ENCODE measurements at regions of chr2 and their contacts with region 1.

Region 1: GRCh38 chr2:37389989-37390765 is 45.7 kb downstream of the QPCT start:
- DNase-seq: peak; percentile 98
- H3K4me3 ChIP-seq: no peak overlapping the region
- H3K27ac ChIP-seq: peak overlapping the region; percentile 85
- H3K4me1 ChIP-seq: peaks cover 43% of the 10 kb centered on the region
- H3K27me3 ChIP-seq: no peaks in the 10 kb centered on the region
- CTCF ChIP-seq: no peak

Region 2: DNA sequence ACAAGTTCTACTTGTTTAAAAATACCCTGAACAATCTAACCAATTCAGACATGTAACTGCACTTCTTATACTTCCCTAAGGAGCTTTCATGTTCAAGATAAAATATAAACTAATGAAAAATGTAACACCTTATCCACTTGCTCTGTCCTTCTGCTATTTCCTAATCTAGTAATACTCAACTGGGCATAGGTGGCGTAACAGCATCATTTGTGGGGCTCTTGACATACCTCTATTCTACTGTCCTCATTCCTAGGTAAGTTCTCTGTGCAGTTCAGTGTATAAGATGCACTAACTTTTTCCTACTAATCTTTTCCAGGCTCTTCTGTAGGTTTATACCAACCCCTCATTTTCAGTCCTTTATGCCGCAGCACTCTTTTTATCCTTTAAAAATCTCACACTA is 102.2 kb before region 1 on chr2:
- CTCF ChIA-PET with region 1: no interaction called
- dilution Hi-C with region 1: no loop called
- in situ Hi-C with region 1: no loop called
- intact Hi-C with region 1: loop called (anchors 5 kb)
- DNase-seq: no peak
- H3K4me3 ChIP-seq: no peak overlapping the region
- H3K27ac ChIP-seq: no peak overlapping the region
- H3K4me1 ChIP-seq: no peaks in the 10 kb centered on the region
- H3K27me3 ChIP-seq: no peaks in the 10 kb centered on the region
- CTCF ChIP-seq: peak; percentile 33 to 41

Region 3: DNA sequence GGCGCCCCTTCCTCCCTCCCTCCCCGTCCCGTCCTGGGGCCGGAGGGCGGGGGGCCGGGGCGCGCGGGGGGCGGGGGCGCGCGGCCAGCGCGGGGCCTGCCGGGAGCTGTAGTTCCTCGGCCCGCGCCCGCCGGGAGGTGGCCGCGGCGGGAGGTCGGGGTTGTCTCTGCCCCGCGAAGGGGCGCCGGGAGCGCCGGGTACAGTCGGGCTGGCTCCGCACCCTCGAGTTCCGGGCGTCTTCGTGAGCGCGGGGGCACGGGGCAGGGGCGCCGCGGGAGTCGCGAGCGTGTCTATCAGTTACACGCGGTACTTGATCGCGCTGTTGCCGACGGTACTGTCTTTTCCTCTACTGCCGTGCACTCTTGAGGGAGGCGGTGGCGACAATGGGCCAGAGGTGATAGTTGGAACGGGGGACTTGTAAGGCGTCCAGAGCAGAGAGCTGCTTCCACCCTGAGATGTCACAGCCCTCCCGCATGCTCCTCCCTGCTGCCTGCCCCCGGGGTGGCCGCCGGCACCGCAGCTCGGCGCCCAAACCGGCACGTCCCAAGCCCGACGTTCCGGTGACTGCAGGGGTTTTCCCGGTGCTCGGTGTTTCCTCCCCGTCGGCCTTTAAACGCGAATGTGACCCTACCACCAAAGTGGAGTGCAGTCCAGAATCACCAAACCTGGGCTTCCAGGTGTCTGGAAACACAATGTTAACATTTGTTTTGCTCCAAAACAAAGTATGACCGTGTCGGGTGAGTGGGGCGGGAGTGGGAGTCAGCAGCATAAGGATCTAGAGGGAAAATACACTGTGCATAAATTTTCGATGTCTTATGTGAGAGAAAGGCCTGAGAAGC is 65.2 kb before region 1 on chr2 and contains the start of gene PRKD3:
- CTCF ChIA-PET with region 1: interaction called, 5 read pairs
- dilution Hi-C with region 1: no loop called
- in situ Hi-C with region 1: no loop called
- intact Hi-C with region 1: loop called (anchors 5 kb)
- DNase-seq: peak; percentile 60
- H3K4me3 ChIP-seq: peak within 1 kb of the TSS; percentile 69 to 91 (median 90)
- H3K27ac ChIP-seq: peak within 1 kb of the TSS; percentile 64
- H3K4me1 ChIP-seq: peaks cover 34% of the 10 kb centered on the region
- H3K27me3 ChIP-seq: no peaks in the 10 kb centered on the region
- CTCF ChIP-seq: no peak
- total RNA-seq, gene PRKD3: 43.0 to 43.3 TPM

Region 4: GRCh38 chr2:37344453-37345361 is 45.5 kb before region 1 on chr2 and contains the start of gene QPCT:
- CTCF ChIA-PET with region 1: interaction called, 3 read pairs
- dilution Hi-C with region 1: no loop called
- in situ Hi-C with region 1: no loop called
- intact Hi-C with region 1: loop called (anchors 5 kb)
- DNase-seq: no peak
- H3K4me3 ChIP-seq: peak within 1 kb of the TSS; percentile 43 to 59 (median 51)
- H3K27ac ChIP-seq: no peak within 1 kb of the TSS
- H3K4me1 ChIP-seq: peaks cover 22% of the 10 kb centered on the region
- H3K27me3 ChIP-seq: no peaks in the 10 kb centered on the region
- CTCF ChIP-seq: no peak
- total RNA-seq, gene QPCT: 0.33 to 14.3 TPM

Region 5: DNA sequence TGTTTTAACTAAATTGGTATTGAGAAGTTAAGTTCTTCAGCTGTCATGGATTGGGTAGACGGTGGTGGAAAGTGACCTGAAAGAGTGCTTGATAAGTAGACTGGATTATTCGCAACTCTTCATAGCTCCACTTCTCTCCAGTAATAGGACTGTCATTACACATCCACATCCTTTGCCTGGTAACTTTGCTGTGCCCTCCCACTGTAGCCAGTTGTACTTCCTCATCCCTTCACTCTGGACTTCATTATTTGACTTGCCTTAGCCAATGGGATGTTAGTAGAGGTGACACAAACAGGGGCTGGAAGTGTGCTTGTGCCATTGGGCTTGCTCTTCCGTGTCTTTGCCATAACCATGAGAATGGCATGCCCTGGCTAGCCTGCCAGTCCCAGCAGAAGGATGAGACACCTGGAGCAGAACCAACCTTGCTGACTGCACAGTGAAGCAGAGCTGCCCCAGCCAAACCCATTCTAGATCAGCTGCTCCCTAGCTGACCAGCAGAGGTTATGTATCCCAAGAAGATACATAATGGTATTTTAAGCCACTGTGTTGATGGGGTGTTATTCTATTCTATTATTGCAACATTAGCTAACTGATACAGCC is 28.9 kb before region 1 on chr2:
- CTCF ChIA-PET with region 1: no interaction called
- dilution Hi-C with region 1: no loop called
- in situ Hi-C with region 1: no loop called
- intact Hi-C with region 1: loop called (anchors 1 kb)
- DNase-seq: peak; percentile 85
- H3K4me3 ChIP-seq: no peak overlapping the region
- H3K27ac ChIP-seq: no peak overlapping the region
- H3K4me1 ChIP-seq: peaks cover 12% of the 10 kb centered on the region
- H3K27me3 ChIP-seq: no peaks in the 10 kb centered on the region
- CTCF ChIP-seq: no peak

Region 6: DNA sequence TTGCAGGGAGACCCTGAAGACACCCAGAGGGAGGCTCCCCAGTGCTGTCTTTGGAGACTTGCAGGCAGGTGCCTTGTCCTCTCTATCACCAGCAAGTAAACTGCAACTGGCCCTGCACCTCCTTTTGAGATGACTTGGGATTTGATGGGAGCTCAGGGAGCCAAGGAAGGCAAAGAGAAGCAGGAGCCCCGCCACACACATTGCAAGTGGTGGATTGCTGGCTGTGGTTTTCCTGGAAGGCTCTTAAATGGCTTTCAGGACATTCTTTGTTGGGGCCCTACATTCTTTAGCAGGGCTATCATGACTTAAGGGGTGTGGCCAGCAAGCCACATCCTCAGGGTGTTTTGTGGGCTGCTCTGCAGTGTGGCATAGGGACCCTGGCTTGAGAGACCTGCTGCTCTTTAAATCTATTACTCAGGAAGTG is 321.1 kb after region 1 on chr2:
- CTCF ChIA-PET with region 1: no interaction called
- dilution Hi-C with region 1: no loop called
- in situ Hi-C with region 1: no loop called
- intact Hi-C with region 1: no loop called
- DNase-seq: peak; percentile 73
- H3K4me3 ChIP-seq: peak overlapping the region in 1 of 3 experiments; percentile 9
- H3K27ac ChIP-seq: peak overlapping the region; percentile 52
- H3K4me1 ChIP-seq: peaks cover 24% of the 10 kb centered on the region
- H3K27me3 ChIP-seq: no peaks in the 10 kb centered on the region
- CTCF ChIP-seq: no peak

Measured in mammary epithelial cell (primary cell).